ENCODE measurements at regions of chr3 and their contacts with region 1.

Region 1: GRCh38 chr3:158727206-158728060 is 4.8 kb downstream of the RARRES1 start:
- DNase-seq: peak; percentile 80
- H3K4me3 ChIP-seq: no peak overlapping the region
- H3K27ac ChIP-seq: no peak overlapping the region
- H3K4me1 ChIP-seq: peaks cover 39% of the 10 kb centered on the region
- H3K27me3 ChIP-seq: no peaks in the 10 kb centered on the region
- CTCF ChIP-seq: peak; percentile 58 to 72
- POLR2A ChIP-seq: no peak

Region 2: GRCh38 chr3:158548691-158549090 is 178.7 kb before region 1 on chr3:
- CTCF ChIA-PET with region 1: no interaction called
- POLR2A ChIA-PET with region 1: no interaction called
- dilution Hi-C with region 1: no loop called
- intact Hi-C with region 1: no loop called
- DNase-seq: no peak
- H3K4me3 ChIP-seq: no peak overlapping the region
- H3K27ac ChIP-seq: no peak overlapping the region
- H3K4me1 ChIP-seq: no peaks in the 10 kb centered on the region
- H3K27me3 ChIP-seq: no peaks in the 10 kb centered on the region
- CTCF ChIP-seq: no peak
- POLR2A ChIP-seq: no peak

Region 3: DNA sequence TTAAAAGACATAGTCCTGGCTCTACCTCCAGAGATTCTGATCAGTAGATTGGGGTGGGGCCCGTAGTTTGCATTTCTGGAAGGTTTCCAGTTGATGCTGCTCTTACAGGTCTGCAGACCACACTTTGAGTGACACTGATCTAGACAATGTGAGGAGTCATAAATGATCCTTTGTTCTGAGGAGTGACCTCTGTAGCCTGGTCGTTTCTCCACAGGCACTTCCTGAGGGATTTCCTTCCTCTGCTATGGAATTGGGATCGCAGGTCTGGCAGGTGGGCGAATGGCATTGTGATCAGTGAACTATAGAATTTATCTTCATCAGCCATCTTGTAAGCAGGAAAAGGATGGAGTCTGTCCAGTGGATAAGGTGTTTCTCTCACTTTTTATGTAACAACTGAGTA is 77.6 kb before region 1 on chr3:
- CTCF ChIA-PET with region 1: interaction called, 16 read pairs
- POLR2A ChIA-PET with region 1: no interaction called
- dilution Hi-C with region 1: no loop called
- intact Hi-C with region 1: no loop called
- DNase-seq: peak; percentile 93
- H3K4me3 ChIP-seq: no peak overlapping the region
- H3K27ac ChIP-seq: peak overlapping the region; percentile 95
- H3K4me1 ChIP-seq: peaks cover 31% of the 10 kb centered on the region
- H3K27me3 ChIP-seq: no peaks in the 10 kb centered on the region
- CTCF ChIP-seq: no peak
- POLR2A ChIP-seq: peak; percentile 57

Region 4: DNA sequence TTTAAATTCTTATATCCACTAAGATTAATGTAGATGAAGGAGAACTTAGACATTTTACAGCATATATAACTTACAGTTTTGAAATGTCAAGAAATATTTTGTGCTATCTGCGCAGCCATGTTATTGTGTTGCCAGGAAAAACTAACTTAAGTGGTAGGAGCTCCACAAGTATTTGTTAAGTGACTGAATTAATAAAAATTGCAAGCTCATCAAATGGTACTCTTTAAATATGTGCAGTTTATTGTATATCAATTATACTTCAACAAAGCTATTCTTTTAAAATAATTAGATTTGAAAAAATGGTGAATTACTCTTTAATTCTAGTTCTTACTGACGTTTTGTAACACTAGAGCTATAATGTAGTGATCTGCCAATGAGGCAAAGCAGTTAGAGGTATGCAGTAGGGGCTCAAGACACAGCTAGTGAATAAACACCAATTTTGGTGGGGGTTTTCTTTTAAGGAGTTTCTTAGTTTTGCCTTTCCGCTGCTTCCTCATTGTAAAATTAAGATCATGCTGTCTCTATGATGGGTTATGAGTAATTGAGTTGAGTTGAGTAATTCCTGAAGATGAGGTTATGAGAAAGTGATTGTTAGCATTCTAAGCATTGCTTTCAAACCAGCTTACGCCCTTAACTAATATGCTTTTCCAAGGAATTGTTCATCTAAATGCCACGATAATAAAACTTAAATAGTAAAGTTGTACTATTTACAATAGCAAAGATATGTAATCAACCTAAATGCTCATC is 44.0 kb before region 1 on chr3:
- CTCF ChIA-PET with region 1: interaction called, 31 read pairs
- POLR2A ChIA-PET with region 1: interaction called, 13 read pairs
- dilution Hi-C with region 1: no loop called
- intact Hi-C with region 1: no loop called
- DNase-seq: no peak
- H3K4me3 ChIP-seq: no peak overlapping the region
- H3K27ac ChIP-seq: no peak overlapping the region
- H3K4me1 ChIP-seq: peaks cover 17% of the 10 kb centered on the region
- H3K27me3 ChIP-seq: no peaks in the 10 kb centered on the region
- CTCF ChIP-seq: no peak
- POLR2A ChIP-seq: no peak

Region 5: GRCh38 chr3:158713094-158713499 is 14.3 kb before region 1 on chr3:
- CTCF ChIA-PET with region 1: interaction called, 34 read pairs
- POLR2A ChIA-PET with region 1: interaction called, 9 read pairs
- dilution Hi-C with region 1: no loop called
- intact Hi-C with region 1: loop called (anchors 1 kb)
- DNase-seq: peak; percentile 99
- H3K4me3 ChIP-seq: no peak overlapping the region
- H3K27ac ChIP-seq: peak overlapping the region; percentile 59
- H3K4me1 ChIP-seq: peaks cover 47% of the 10 kb centered on the region
- H3K27me3 ChIP-seq: no peaks in the 10 kb centered on the region
- CTCF ChIP-seq: no peak
- POLR2A ChIP-seq: no peak

Region 6: DNA sequence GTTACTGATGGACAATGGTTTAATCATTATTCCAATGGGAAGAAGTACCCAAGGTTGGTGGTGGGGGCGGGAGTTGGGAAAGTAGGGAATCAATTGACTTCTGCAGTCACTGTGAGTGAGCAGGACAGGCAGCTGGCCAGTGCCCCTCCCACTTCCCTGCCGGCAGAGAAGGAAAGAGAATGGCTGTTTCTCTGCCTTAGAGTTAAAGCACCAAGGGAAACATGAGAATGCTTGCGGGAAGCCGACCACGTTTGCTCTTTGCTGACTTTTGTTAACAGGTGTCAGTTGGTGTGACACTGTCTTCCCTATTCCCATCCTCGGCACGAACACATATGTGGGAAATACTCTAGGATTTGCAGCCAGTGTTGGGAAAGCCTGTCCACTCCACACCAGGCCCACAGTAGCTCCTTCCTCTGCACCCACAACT is 40.9 kb after region 1 on chr3:
- CTCF ChIA-PET with region 1: interaction called, 14 read pairs
- POLR2A ChIA-PET with region 1: no interaction called
- dilution Hi-C with region 1: no loop called
- intact Hi-C with region 1: loop called (anchors 1 kb)
- DNase-seq: peak; percentile 75
- H3K4me3 ChIP-seq: no peak overlapping the region
- H3K27ac ChIP-seq: peak overlapping the region; percentile 3
- H3K4me1 ChIP-seq: peaks cover 23% of the 10 kb centered on the region
- H3K27me3 ChIP-seq: no peaks in the 10 kb centered on the region
- CTCF ChIP-seq: no peak
- POLR2A ChIP-seq: no peak

Region 7: DNA sequence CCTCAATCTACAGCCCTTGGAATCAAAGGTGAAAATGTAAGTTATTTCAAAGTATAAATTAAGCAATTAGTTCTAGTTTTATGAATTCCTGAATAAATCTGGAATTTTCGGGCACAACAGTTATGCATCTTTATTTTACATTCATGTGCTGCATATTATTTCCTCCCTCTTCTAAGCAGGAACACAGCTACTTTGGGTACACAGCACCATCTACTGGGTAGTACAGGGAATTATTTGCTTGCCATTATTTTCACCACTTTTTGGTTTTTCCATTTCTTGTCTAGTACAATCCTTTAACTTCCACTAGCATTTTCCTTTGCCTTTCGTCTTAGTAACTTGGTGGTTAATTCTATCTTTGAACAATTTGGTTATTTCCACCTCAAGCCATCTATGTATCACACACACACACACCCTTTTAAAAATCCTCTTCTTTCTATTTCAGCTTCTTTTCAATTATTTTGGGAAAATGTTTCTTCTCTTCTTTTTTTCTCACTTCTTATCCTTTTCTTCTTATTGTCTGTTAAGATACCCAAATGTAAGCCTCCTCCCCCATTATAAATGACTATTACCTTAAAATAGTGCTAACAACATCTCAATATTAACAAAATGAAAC is 525.4 kb after region 1 on chr3:
- CTCF ChIA-PET with region 1: interaction called, 3 read pairs
- POLR2A ChIA-PET with region 1: no interaction called
- dilution Hi-C with region 1: no loop called
- intact Hi-C with region 1: loop called (anchors 5 kb)
- DNase-seq: peak; percentile 80
- H3K4me3 ChIP-seq: no peak overlapping the region
- H3K27ac ChIP-seq: no peak overlapping the region
- H3K4me1 ChIP-seq: peaks cover 6% of the 10 kb centered on the region
- H3K27me3 ChIP-seq: peaks cover 0 to 6% of the 10 kb centered on the region in 2 experiments
- CTCF ChIP-seq: peak; percentile 53 to 57
- POLR2A ChIP-seq: no peak

Measured in endothelial cell of umbilical vein (primary cell).